PC-3 (cell line): ENCODE measurements at regions of chr5 and their contacts with region 1.

Region 1: DNA sequence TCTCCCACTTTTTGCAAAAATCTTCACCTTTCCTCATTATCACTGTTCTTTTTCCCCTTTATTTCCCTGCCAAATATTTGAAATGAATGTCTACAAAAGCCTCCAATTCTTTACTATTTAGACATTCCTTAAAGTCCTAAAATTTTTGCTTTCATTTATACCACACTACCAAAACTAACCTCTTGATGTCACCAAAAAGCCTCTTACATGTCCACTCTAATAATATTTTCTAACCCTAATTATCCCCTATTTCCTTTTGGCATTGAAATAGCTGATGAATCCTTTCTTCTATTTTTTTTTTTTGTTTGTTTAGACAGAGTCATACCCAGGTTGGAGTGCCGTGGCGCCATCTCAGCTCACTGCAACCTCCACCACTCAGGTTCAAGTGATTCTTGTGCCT is 32.3 kb upstream of the NRG2 start:
- DNase-seq: peak; percentile 45
- ATAC-seq: no peak; the same call in 1 of the 2 replicates
- H3K4me3 ChIP-seq: no peak overlapping the region
- H3K27ac ChIP-seq: no peak overlapping the region
- H3K4me1 ChIP-seq: no peaks in the 10 kb centered on the region
- H3K27me3 ChIP-seq: peaks cover 2% of the 10 kb centered on the region; the same call in 1 of the 2 replicates
- CTCF ChIP-seq: peak; percentile 65

Region 2: DNA sequence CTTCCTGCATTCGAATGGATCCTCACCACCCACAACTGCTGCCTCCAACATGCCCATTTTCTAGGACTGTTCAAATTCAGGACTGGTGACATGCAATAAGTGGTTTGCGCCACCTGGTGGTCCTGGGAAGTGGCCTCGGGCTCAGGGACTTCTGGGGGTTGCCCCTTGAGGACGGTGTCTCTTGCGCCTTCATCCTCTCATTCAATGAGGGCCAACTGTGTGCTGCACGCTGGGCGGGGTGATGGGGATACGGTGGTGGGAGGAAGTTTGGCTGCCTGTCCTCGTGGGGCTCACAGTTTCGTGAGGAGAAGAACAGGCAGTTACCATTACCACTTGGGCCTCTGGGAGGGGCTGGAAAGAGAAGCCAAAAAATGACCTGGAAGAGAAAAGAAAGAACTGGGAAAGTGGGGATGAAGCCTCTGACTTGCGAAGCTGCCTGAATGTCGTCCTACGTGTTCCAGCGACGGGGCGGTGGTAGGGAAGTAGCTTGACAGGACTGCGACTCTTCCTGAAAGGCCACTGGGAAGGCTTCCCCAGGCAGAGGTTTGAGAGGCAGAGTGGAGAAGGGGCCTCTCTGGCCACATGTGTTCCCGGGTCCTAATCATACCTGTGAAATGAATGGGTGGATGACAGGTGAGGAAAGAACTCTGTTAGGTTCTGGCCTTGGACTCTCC is 230.8 kb before region 1 on chr5:
- CTCF ChIA-PET with region 1: no interaction called
- POLR2A ChIA-PET with region 1: no interaction called
- intact Hi-C with region 1: no loop called
- DNase-seq: peak; percentile 74
- ATAC-seq: peak; percentile 92
- H3K4me3 ChIP-seq: no peak overlapping the region
- H3K27ac ChIP-seq: no peak overlapping the region
- H3K4me1 ChIP-seq: no peaks in the 10 kb centered on the region
- H3K27me3 ChIP-seq: no peaks in the 10 kb centered on the region
- CTCF ChIP-seq: peak; percentile 90

Region 3: DNA sequence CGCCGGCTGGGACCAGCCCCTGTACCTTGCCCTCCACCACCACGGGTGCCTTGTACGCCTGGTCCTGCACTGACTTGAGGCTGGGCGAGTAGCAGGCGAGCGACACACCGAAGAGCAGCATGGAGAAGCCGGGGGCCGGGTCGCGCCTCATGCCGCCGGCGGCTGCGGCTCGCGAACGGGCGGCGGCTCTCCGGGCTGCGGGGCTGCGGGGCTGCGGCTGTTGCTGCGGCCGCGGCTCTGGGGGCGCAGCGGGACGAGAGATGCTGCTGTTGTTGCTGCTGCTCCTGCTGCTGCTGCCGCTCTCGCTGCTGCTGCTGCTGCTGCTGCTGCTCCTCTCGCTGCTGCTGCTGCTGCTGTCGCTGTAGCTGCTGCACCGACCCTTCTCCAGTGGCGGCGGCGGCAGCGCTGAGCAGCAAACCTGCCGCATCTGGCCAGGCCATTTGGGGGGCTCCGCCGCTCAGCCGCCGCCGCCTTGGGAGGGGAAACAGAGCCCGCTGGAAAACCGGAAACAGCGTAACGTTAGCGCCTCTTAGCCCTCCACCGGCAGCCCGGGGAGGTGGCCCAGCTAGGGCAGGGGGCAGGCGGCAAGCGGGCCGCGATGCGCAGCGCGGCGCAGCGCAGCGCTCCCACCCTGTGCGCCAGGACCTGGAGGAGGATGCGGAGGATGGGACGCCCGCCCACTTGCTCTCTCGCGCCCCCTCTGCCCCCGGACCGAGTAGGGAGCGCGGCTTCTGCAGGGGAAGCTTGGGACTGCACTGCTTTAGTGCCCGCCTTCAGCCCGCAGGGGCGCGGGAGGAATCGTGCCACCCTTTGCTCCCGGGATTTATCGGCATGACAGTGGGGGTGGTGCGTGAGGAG is 32.5 kb before region 1 on chr5 and contains the start of gene NRG2:
- CTCF ChIA-PET with region 1: no interaction called
- POLR2A ChIA-PET with region 1: no interaction called
- intact Hi-C with region 1: no loop called
- DNase-seq: peak; percentile 53
- ATAC-seq: peak; percentile 58
- H3K4me3 ChIP-seq: peak within 1 kb of the TSS; percentile 86
- H3K27ac ChIP-seq: 0 out of 2 replicates have a peak within 1 kb of the TSS, but pooled peaks have one; percentile 16
- H3K4me1 ChIP-seq: peaks cover 25% of the 10 kb centered on the region
- H3K27me3 ChIP-seq: no peaks in the 10 kb centered on the region
- CTCF ChIP-seq: peak; percentile 56
- total RNA-seq, gene NRG2: 1.8 and 3.2 TPM in 2 replicates

Region 4: DNA sequence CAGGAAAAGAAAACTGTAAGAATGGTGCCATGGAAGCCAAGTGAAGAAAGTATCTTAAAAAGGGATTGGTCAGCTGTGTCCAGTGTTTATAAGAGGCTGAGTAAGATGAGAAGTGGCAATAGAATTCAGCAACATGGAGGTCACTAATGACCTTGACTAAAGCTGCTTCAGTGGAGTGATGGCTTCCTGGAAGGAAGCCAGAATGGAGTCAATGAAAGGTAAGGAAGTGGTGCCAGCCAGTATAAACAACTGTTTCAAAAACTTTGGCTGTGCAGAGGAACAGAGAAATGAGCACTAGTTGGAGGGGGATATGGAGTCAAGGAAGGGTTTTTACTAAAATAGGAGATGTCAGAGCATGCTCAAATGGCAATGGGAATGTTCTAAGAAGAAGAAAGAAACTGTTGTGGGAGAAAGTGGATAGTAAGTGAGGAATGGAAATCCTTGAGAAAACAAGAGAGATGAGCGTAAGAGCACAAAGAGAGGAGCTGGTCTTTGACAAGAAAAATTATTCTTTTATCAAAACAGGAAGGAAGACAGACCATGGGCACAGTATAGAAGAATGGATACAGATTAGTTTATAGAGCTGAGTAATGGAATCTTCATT is 21.2 kb before region 1 on chr5:
- CTCF ChIA-PET with region 1: no interaction called
- POLR2A ChIA-PET with region 1: no interaction called
- intact Hi-C with region 1: no loop called
- DNase-seq: no peak
- ATAC-seq: no peak
- H3K4me3 ChIP-seq: no peak overlapping the region
- H3K27ac ChIP-seq: no peak overlapping the region
- H3K4me1 ChIP-seq: no peaks in the 10 kb centered on the region
- H3K27me3 ChIP-seq: peaks cover 36% of the 10 kb centered on the region
- CTCF ChIP-seq: no peak

Region 5: DNA sequence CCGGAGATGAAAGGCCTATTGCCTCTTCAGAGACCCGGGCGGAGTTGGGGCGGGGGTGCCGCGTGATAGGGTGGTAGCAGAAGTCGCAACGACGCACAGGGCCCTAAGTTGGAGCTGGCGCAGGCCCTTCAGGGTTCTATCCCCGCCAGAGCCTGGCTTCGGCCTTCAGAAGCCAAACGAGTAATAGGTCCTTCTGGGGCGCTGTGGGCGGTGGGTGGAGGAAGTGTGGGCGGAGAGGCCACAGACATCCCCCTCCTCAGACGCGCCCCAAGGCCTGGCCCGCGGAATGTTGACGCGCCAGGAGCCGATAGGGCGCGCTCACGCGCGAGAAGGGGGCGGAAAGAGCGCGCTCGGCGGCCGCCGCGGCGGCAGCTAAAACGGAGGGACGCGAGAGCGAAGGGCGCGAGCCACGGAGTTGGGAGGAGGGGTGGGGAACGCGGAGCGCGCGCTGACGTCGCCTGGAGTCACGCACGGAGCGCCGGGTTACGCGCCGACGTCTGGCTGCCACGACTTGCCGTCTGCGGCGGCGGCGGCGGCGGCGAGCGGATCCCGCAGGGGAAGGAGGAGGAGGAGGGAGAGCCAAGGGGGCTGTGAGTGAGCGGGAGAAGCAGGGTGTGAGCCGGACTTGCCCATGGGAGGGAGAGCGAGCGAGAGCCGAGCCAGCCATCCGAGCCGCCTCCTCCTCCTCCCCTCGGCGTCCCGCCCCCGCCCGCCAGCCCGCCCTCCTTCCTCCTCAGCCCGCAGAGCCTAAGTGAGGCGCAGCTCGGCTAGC is 32.1 kb after region 1 on chr5:
- CTCF ChIA-PET with region 1: no interaction called
- POLR2A ChIA-PET with region 1: interaction called, 3 read pairs
- intact Hi-C with region 1: loop called (anchors 2 kb)
- DNase-seq: peak; percentile 93
- ATAC-seq: peak; percentile 90
- H3K4me3 ChIP-seq: peak overlapping the region; percentile 95
- H3K27ac ChIP-seq: peak overlapping the region; percentile 68
- H3K4me1 ChIP-seq: peaks cover 17% of the 10 kb centered on the region
- H3K27me3 ChIP-seq: no peaks in the 10 kb centered on the region
- CTCF ChIP-seq: peak; percentile 24

Region 6: GRCh38 chr5:140157032-140157803 is 81.8 kb after region 1 on chr5:
- CTCF ChIA-PET with region 1: interaction called, 3 read pairs
- POLR2A ChIA-PET with region 1: no interaction called
- intact Hi-C with region 1: loop called (anchors 1 kb)
- DNase-seq: peak; percentile 91
- ATAC-seq: peak; percentile 99
- H3K4me3 ChIP-seq: peak overlapping the region; percentile 59
- H3K27ac ChIP-seq: no peak overlapping the region
- H3K4me1 ChIP-seq: peaks cover 5% of the 10 kb centered on the region
- H3K27me3 ChIP-seq: no peaks in the 10 kb centered on the region
- CTCF ChIP-seq: peak; percentile 90